ENCODE measurements at regions of chr5 and their contacts with region 1.

Region 1: DNA sequence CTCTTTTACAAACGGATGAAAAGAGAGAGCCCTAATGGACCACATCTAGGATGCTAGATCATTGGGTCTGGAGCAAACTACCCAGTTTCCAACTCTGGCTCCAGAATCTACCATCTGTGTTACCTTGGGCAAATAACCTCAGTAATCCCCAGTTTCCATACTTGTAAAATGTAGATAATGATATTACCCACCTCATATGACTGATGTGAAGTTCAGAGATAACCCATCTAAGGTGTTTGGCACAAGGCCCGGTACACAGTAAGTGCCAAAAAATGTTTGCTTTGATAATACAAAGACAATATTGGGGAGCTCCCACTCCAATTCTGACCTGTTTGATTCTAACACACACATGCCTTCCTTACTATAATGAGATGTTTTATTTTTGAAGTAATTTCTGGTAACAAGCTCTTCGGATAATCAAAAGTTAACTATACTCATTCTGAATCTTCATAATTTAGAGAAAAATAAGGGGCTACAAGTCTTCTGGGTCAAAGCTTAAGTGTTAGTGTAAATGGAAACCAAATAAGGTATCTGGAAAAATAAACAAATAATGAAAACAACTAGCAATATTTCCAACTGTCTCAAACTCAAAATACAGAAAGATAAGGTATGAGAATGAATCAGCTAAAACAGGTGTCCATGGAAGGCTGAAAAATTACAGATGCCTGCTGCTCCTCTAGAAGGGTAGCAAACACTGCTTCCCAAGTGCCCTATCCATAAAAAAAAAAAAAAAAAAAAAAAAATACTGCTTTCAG is 30.4 kb downstream of the ELL2 start:
- DNase-seq: no peak
- H3K4me3 ChIP-seq: no peak overlapping the region
- H3K27ac ChIP-seq: no peak overlapping the region
- H3K27me3 ChIP-seq: no peaks in the 10 kb centered on the region
- CTCF ChIP-seq: no peak

Region 2: DNA sequence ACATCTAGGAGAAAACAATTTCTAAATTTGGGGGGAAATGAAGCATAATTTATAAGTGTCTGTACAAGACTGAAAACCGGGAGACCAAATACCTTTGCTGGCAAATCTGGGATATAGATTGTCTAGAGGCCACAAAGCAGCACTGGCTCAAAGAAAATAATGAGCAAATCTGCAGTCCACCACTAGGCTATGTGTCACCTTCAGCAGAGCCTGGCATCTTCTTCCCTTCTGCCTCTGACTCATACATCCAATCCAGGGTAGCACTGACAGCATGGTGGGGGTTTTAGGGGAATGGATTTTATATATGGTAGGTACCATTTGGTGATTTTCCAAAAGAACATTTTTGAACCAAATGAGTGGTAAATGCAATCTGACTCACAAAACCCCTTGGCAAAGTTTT is 527.3 kb before region 1 on chr5:
- CTCF ChIA-PET with region 1: no interaction called
- POLR2A ChIA-PET with region 1: no interaction called
- DNase-seq: no peak
- H3K4me3 ChIP-seq: no peak overlapping the region
- H3K27ac ChIP-seq: no peak overlapping the region
- H3K27me3 ChIP-seq: peaks cover 6% of the 10 kb centered on the region
- CTCF ChIP-seq: no peak

Region 3: DNA sequence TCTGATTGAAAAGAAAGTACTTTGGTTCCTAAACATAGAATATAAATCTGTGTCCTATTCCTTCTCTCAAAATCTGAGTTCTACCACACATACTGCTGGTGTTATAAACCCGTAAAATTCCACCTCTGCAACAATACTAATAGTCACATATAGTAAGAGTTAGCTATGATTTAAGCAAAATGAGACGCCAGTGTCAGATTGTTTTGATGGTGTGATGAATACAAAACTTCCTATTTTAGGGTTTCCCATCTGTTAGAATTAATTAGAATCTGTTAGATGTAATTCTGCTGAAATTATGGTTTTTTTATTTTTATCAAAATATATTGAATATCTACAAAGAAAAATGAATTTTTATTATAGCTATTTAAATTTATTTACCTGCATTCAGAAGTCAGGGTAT is 349.7 kb before region 1 on chr5:
- CTCF ChIA-PET with region 1: no interaction called
- POLR2A ChIA-PET with region 1: no interaction called
- DNase-seq: no peak
- H3K4me3 ChIP-seq: no peak overlapping the region
- H3K27ac ChIP-seq: no peak overlapping the region
- H3K27me3 ChIP-seq: no peaks in the 10 kb centered on the region
- CTCF ChIP-seq: no peak

Region 4: DNA sequence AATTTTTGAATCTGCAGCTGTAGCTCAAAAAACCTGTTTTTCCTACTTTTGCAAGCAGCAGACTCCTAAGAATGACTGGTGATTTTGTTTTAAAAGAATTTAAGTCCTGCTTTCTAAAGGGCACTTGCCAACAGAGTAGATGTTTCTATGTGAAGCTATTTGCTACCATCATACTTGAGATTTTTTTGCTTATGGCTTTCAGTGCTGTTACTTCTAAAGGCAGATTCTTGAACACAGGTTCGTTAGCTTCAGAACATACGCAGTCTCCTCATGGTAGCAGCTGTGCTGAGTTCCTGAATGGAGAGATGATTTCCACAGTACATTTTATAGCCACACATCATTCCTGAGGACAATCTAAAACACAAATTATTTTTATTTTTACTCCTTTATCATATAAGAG is 54.7 kb after region 1 on chr5:
- CTCF ChIA-PET with region 1: interaction called, 4 read pairs
- POLR2A ChIA-PET with region 1: interaction called, 11 read pairs
- DNase-seq: no peak
- H3K4me3 ChIP-seq: no peak overlapping the region
- H3K27ac ChIP-seq: no peak overlapping the region
- H3K27me3 ChIP-seq: no peaks in the 10 kb centered on the region
- CTCF ChIP-seq: no peak

Measured in AG04450 (cell line).